ENCODE measurements at regions of chr22 and their contacts with region 1.

Region 1: DNA sequence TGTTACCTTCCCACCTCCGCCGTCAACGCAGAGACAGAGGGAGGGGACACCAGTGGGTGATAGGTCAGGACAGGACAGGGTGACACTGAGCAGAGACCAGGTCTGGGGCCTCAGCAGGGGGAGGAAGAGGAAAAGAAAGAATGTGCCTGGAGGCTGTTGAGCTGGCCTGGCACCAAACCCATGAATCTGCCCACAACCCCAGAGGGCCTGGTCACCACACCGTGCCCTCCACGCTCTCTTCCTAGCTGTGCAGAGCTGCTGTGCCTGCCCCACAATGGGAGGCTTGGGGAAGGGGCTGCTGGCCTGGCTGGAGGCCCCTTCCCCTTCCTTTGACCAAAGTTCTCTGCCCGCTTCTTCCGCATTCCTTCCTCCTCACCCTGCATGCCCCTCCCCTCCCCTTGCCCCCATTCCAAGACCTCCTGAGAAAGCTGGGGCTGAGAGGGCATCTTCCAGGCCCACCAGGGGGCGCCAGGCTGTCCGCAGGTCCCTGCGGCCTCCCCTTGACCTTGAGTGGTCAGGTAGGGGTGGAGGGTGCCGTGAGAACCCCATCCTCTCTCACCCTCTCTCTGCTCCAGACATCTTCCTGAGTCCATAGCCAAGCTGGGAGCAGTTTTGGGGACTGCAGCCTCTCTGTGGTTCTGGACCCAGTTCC is 11.0 kb upstream of the CACNA1I start:
- DNase-seq: no peak
- ATAC-seq: peak; percentile 70
- H3K4me3 ChIP-seq: no peak overlapping the region
- H3K27ac ChIP-seq: no peak overlapping the region
- H3K4me1 ChIP-seq: peaks cover 4% of the 10 kb centered on the region
- H3K27me3 ChIP-seq: no peaks in the 10 kb centered on the region
- CTCF ChIP-seq: peak; percentile 85

Region 2: GRCh38 chr22:39478441-39479264 is 80.9 kb before region 1 on chr22:
- CTCF ChIA-PET with region 1: no interaction called
- POLR2A ChIA-PET with region 1: no interaction called
- in situ Hi-C with region 1: no loop called
- intact Hi-C with region 1: no loop called
- DNase-seq: no peak
- ATAC-seq: no peak
- H3K4me3 ChIP-seq: no peak overlapping the region
- H3K27ac ChIP-seq: no peak overlapping the region
- H3K4me1 ChIP-seq: no peaks in the 10 kb centered on the region
- H3K27me3 ChIP-seq: no peaks in the 10 kb centered on the region
- CTCF ChIP-seq: no peak

Region 3: GRCh38 chr22:39589875-39590274 is 30.3 kb after region 1 on chr22:
- CTCF ChIA-PET with region 1: no interaction called
- POLR2A ChIA-PET with region 1: interaction called, 14 read pairs
- in situ Hi-C with region 1: no loop called
- intact Hi-C with region 1: no loop called
- DNase-seq: no peak
- ATAC-seq: no peak
- H3K4me3 ChIP-seq: no peak overlapping the region
- H3K27ac ChIP-seq: no peak overlapping the region
- H3K4me1 ChIP-seq: peaks cover 15% of the 10 kb centered on the region
- H3K27me3 ChIP-seq: no peaks in the 10 kb centered on the region
- CTCF ChIP-seq: no peak

Region 4: GRCh38 chr22:39932918-39933649 is 373.5 kb after region 1 on chr22:
- CTCF ChIA-PET with region 1: interaction called, 3 read pairs
- POLR2A ChIA-PET with region 1: interaction called, 11 read pairs
- in situ Hi-C with region 1: no loop called
- intact Hi-C with region 1: no loop called
- DNase-seq: peak; percentile 12
- ATAC-seq: no peak
- H3K4me3 ChIP-seq: no peak overlapping the region
- H3K27ac ChIP-seq: no peak overlapping the region
- H3K4me1 ChIP-seq: no peaks in the 10 kb centered on the region
- H3K27me3 ChIP-seq: peaks cover 9% of the 10 kb centered on the region
- CTCF ChIP-seq: peak; percentile 70

Region 5: DNA sequence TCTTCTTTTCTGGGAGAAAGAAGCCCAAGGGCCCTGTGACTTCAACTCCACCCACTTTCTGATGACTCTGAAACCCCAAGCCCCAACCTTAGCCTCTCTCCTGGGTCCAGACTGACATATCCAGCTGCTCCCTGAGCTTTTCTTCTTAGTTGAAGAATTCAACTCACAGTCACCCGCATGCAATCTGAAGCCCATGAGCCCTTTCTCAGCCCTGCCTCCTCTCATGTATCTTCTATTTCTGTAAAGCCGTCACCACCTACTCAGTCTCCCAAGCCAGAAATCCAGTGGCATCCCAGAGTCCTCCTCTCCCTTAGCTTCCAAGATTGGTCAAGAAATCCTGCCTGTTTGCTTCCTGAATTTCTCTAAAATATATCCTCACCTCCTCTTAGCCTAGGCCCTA is 393.5 kb after region 1 on chr22:
- CTCF ChIA-PET with region 1: interaction called, 11 read pairs
- POLR2A ChIA-PET with region 1: no interaction called
- in situ Hi-C with region 1: no loop called
- intact Hi-C with region 1: no loop called
- DNase-seq: no peak
- ATAC-seq: no peak
- H3K4me3 ChIP-seq: no peak overlapping the region
- H3K27ac ChIP-seq: no peak overlapping the region
- H3K4me1 ChIP-seq: no peaks in the 10 kb centered on the region
- H3K27me3 ChIP-seq: no peaks in the 10 kb centered on the region
- CTCF ChIP-seq: no peak

Measured in Panc1 (cell line).